ENCODE measurements at regions of chr4 and their contacts with region 1.

Region 1: GRCh38 chr4:147590249-147590920 is 26.8 kb upstream of the TMEM184C start:
- DNase-seq: peak; percentile 34
- H3K4me3 ChIP-seq: peak overlapping the region in 2 of 3 experiments; percentile 6 to 27
- H3K27ac ChIP-seq: peak overlapping the region; percentile 29
- H3K4me1 ChIP-seq: no peaks in the 10 kb centered on the region
- H3K27me3 ChIP-seq: no peaks in the 10 kb centered on the region
- CTCF ChIP-seq: peak; percentile 75 to 80

Region 2: DNA sequence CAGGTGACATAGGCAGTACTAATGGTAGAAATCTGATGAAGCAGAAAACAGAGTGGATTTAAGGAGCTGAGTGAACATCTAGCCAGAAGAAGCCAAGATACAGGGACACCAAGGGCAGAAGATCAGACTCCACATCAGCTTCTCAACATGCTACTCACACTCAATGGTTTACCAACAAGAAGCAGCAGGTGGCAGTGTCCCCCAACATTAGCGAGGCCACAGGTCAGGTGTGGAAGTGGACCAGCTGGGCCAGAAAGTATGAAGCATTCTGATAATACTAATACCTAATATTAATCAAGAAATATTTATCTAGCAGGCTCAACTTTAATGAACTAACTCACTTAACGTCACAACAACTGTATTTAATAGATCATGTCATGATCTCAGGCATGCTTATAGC is 571.3 kb before region 1 on chr4:
- CTCF ChIA-PET with region 1: interaction called, 5 read pairs
- dilution Hi-C with region 1: no loop called
- in situ Hi-C with region 1: no loop called
- intact Hi-C with region 1: loop called (anchors 1 kb)
- DNase-seq: peak; percentile 42
- H3K4me3 ChIP-seq: no peak overlapping the region
- H3K27ac ChIP-seq: no peak overlapping the region
- H3K4me1 ChIP-seq: no peaks in the 10 kb centered on the region
- H3K27me3 ChIP-seq: peaks cover 3% of the 10 kb centered on the region
- CTCF ChIP-seq: peak; percentile 69 to 81

Region 3: DNA sequence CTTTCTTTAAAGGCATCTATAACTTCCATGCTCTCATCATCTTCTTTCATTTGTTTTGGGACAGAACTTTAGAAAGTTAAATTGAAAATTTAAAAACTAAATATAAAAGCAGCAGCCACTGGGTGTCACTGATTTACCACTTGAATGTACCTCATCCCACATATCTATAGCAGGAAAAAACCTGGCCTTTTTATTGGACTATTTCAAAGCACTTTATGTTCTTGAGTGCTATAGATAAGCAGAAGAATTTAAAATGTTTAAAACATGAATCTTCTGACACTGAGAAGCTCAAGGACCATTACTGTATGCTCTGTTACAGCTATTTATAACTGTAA is 479.4 kb before region 1 on chr4:
- CTCF ChIA-PET with region 1: no interaction called
- dilution Hi-C with region 1: no loop called
- in situ Hi-C with region 1: no loop called
- intact Hi-C with region 1: loop called (anchors 1 kb)
- DNase-seq: no peak
- H3K4me3 ChIP-seq: no peak overlapping the region
- H3K27ac ChIP-seq: no peak overlapping the region
- H3K4me1 ChIP-seq: no peaks in the 10 kb centered on the region
- H3K27me3 ChIP-seq: no peaks in the 10 kb centered on the region
- CTCF ChIP-seq: peak in 1 of 2 donors; percentile 28

Region 4: DNA sequence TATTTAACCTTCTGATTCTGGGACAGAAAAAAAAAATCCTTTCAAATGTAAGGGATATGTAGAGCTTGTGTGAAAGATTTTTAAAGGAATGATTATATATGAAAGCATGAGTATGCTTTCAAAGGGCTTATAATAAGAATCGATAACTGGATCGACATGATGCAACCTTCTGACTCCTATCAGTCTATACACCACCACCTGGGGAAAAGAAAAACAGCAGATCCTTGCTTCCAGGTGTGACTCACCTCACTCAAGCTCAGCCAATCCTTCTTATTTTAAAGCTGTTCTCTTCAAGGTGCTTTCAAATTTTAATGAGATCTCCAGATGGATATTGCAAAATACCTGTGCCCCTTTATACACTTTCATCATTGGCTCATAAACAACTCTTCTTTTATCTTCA is 211.6 kb before region 1 on chr4:
- CTCF ChIA-PET with region 1: no interaction called
- dilution Hi-C with region 1: no loop called
- in situ Hi-C with region 1: no loop called
- intact Hi-C with region 1: loop called (anchors 2 kb)
- DNase-seq: peak; percentile 55
- H3K4me3 ChIP-seq: no peak overlapping the region
- H3K27ac ChIP-seq: no peak overlapping the region
- H3K4me1 ChIP-seq: peaks cover 3% of the 10 kb centered on the region
- H3K27me3 ChIP-seq: no peaks in the 10 kb centered on the region
- CTCF ChIP-seq: peak; percentile 18 to 46

Region 5: DNA sequence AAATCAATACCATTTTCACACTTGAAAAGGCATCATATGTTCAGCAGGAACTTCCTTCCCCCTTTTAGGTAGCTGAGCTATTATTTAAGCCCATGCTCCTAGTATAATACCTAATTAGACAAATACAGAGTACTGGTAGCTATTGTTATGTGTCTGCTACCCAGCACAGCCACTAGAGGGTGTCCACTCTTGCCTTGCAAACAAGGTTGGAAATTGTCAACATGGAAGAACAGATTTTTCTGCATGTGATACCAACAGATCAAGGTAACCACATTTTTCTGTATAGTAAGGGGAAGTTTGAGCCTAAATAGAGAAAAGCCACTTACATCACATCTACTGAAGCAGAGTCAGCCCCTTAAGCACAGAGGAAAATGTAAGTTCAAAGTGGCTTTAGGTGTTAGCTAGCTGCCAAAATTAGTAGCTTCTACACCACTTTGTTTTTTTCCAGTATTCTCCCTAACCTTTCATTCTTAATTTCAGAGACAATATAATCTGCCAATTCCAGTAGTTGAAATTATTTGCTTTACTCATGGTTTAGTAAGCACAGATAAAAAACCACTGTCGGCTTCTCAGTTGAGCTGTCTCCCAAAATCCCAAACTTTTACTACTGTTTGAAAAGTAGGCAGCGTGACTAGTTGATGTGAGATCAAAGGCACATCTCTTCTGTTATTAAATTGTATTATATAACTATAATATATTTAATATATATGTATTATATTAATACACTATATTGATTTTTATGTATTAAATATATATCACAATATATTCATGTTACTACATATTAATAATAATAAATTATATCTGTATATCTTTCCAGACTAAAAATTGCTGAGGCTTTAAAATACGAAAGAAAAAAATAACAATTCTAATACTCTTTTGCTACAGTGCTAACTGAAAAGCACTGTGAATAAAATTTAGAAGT is 71.3 kb before region 1 on chr4:
- CTCF ChIA-PET with region 1: interaction called, 7 read pairs
- dilution Hi-C with region 1: no loop called
- in situ Hi-C with region 1: no loop called
- intact Hi-C with region 1: loop called (anchors 1 kb)
- DNase-seq: peak; percentile 60
- H3K4me3 ChIP-seq: no peak overlapping the region
- H3K27ac ChIP-seq: no peak overlapping the region
- H3K4me1 ChIP-seq: peaks cover 5% of the 10 kb centered on the region
- H3K27me3 ChIP-seq: no peaks in the 10 kb centered on the region
- CTCF ChIP-seq: peak; percentile 96 to 97

Measured in mammary epithelial cell (primary cell).